ENCODE measurements at regions of chr11 and their contacts with region 1.

Region 1: GRCh38 chr11:83836883-83837654 is 550.9 kb upstream of the CCDC90B start:
- DNase-seq: peak; percentile 49
- CTCF ChIP-seq: peak; percentile 58

Region 2: DNA sequence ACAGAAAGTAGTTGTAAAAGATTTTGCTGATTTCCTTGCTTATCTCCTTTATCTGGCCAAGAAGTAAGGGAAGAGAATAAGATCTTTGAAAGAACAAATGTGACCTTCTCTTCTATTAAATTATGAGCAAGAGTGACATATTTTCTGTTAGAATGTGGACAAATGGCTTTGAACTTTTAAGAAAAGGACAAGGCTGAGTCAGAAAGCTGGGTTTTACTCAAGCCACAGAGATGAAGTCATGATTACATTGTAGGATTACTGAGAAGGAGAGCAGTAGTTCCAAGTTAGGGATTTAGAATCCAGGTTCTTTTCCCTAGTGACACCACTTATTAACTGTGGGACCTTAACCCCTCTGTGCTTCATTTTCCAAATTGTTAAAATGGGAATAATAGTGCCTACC is 564.4 kb before region 1 on chr11:
- CTCF ChIA-PET with region 1: no interaction called
- POLR2A ChIA-PET with region 1: no interaction called
- DNase-seq: no peak
- CTCF ChIP-seq: no peak

Region 3: GRCh38 chr11:83819933-83820549 is 17.0 kb before region 1 on chr11:
- CTCF ChIA-PET with region 1: interaction called, 29 read pairs
- POLR2A ChIA-PET with region 1: no interaction called
- DNase-seq: peak; percentile 11
- CTCF ChIP-seq: peak; percentile 30

Region 4: DNA sequence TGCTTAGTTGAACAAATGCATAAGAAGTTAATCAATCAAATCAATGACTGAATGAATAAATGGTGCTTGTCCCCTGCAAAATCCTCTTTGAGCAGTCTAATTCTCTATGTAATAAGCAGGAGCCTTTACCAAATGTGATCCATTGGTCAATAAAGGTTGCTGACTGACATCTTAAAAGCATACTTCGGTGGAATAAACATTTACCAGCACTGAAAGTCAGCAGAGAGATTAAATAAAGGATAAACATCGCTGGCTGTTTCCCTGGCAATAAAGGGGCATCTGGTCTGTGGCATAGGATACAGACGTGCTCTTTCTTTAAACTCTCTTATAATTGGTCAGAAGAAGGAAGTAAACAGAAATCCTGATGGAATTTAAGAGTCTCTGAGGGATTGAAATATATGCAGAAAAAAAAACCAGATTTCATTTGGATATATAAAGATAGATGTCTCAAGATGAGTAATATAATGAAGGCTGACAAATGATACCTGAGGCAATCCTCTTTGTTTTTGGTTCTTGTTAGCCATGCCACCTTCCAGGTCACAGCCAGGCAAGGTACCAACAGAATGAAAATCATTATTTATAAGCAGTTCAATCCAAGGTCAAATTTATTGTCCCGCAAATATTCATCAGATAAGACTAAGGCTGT is 27.5 kb after region 1 on chr11:
- CTCF ChIA-PET with region 1: no interaction called
- POLR2A ChIA-PET with region 1: no interaction called
- DNase-seq: no peak
- CTCF ChIP-seq: no peak

Region 5: DNA sequence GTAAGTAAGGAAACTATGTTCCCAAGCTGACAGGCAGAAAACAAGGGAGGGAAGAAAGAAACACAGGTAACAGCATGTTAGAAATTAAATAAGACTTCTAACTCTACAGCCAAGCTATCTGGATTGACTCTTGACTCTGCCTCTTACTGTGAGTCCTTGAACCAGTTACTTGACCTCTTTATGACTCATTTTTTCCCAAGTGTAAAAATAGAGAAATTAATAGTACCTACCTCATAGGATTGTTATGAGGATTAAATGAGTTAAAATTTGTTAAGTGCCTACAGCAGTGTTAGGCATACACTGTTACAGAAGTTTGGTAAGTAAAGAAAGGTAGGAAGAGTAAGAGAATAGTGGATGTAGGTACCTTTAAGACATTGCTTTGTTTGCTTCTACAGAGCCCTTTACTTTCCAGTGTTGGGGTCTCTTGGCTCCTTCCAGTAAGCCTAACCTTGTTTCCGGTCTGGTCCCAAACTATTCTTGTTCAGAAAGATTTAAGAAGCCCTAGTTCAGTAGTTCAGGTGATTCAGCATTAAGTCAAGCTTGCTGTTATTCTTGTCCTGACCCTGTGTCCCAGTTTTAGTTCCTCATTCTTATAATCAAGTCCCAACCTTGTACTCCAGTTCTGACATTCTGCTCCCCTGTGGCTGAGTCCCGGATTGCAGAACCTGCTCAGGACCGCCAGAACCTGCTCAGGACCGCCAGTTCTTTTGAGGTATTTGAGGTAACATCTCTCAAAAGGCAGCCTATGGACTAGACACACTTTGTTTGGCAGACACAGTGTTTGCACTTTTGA is 412.5 kb after region 1 on chr11:
- CTCF ChIA-PET with region 1: interaction called, 12 read pairs
- POLR2A ChIA-PET with region 1: no interaction called
- DNase-seq: no peak
- CTCF ChIP-seq: peak; percentile 4

Region 6: DNA sequence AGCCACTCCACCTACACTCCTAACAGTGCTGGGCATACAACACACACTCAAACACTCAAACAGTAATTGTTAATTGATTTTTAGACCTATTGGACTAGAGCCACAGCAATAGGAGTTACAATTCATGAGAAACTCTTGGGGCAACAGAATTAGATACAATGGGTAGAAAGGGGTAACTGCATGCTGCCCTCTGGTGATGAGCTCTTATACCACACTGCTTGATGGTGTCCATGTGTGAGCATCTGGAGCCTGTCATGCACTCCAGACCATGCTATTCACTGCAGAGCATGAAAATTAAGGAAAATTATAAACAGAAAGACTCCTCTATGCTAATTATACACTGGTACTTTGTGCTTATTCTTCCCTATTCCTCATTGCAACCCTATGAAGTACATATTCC is 424.6 kb after region 1 on chr11:
- CTCF ChIA-PET with region 1: interaction called, 39 read pairs
- POLR2A ChIA-PET with region 1: no interaction called
- DNase-seq: no peak
- CTCF ChIP-seq: no peak

Region 7: DNA sequence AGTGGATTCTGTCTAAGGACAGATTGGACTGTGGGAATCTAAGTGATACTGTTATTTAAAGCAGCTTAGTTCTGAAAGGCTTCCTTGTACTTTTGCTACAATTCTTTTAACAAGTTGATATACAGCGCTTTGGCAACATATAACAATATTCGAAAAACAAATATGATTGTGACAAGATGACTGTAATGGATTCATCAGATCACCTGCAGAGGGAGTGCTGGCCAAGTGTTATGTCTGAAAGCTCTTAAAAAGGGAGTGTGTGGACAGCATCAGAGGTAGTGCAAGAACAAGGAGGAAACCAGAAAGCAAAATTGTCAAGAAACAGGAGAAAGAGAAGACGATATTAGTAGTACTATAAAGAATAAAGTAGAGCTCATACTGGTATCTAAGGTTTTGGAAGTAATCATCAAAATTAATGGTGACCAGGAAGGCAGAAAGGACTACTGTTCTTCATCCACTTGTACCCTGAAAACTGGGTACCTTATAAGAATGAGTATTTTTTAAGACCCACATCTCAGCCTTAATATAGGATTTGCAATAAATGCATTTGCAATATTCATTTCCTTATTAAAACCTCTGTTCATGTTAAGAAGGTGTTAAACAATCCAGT is 561.1 kb after region 1 on chr11:
- CTCF ChIA-PET with region 1: no interaction called
- POLR2A ChIA-PET with region 1: no interaction called
- DNase-seq: no peak
- CTCF ChIP-seq: no peak

Region 8: DNA sequence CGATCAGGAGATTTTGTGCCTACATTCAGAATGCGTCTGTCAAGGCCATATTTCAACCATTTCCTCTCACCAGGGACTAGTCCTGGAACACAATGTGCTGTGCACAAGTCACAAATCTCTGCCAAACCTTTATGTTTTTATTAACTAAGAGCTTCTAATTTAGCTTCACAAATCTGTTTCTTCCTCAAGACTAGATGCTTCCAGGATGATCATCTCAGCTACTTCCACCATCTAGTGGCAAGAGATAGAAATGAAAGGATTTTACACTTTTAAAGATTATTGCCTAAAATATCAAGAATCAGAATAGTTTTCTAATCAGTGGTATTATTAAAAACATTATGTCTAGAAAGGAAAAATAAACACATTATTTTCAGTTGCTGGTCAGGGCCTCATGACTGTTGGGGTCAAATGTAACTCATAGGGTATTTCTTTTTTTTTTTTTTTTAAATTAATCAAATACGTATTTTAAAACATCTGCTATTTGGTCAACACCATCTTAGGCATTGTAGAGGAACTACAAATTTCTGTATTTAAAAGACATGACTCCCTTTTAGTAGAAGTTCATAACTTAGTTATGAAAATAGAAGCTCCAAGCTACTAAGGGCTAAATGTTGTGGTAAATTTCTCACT is 687.5 kb after region 1 on chr11:
- CTCF ChIA-PET with region 1: interaction called, 22 read pairs
- POLR2A ChIA-PET with region 1: no interaction called
- DNase-seq: peak; percentile 15
- CTCF ChIP-seq: peak; percentile 33

Measured in GM10248 (cell line).